ENCODE measurements at regions of chr18 and their contacts with region 1.

Region 1: GRCh38 chr18:2758309-2758708 is 88.5 kb upstream of the EMILIN2 start:
- DNase-seq: no peak
- H3K4me3 ChIP-seq: no peak overlapping the region
- H3K27ac ChIP-seq: no peak overlapping the region
- H3K4me1 ChIP-seq: no peaks in the 10 kb centered on the region
- H3K27me3 ChIP-seq: no peaks in the 10 kb centered on the region
- CTCF ChIP-seq: no peak

Region 2: DNA sequence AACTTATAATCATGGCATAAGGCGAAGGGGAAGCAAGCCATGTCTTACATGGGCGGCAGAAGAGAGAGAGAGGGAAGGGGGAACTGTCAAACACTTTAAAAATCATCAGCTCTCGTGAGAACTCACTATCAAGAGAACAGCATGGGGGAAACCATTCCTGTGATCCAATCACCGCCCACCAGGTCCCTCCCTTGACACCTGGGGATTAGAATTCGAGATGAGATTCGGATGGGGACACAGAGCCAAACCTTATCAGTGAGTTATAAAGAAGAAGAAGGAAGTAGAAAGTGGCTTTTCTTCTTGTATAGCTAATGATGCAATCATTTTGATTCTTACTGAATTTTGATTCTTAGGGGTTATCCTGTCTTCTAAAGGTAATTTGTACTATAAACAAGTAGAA is 51.4 kb before region 1 on chr18:
- CTCF ChIA-PET with region 1: no interaction called
- POLR2A ChIA-PET with region 1: no interaction called
- intact Hi-C with region 1: loop called (anchors 5 kb)
- DNase-seq: no peak
- H3K4me3 ChIP-seq: no peak overlapping the region
- H3K27ac ChIP-seq: peak overlapping the region; percentile 58
- H3K4me1 ChIP-seq: no peaks in the 10 kb centered on the region
- H3K27me3 ChIP-seq: no peaks in the 10 kb centered on the region
- CTCF ChIP-seq: no peak

Region 3: DNA sequence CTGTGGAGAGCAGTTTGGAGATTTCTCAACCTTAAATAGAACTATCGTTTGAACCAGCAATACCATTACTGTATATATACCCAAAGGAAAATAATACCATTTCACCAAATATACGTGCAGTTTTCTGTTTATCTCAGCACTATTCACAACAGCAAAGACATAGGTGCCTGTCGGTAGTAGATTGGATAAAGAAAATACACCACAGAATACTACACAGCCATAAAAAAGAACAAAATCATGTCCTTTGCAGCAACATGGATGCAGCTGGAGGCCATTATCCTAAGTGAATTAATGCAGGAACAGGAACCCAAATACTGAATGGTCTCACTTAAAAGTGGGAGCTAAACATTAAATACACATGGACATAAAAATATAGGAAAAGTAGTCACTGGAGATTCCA is 21.5 kb before region 1 on chr18:
- CTCF ChIA-PET with region 1: no interaction called
- POLR2A ChIA-PET with region 1: no interaction called
- intact Hi-C with region 1: no loop called
- DNase-seq: no peak
- H3K4me3 ChIP-seq: no peak overlapping the region
- H3K27ac ChIP-seq: no peak overlapping the region
- H3K4me1 ChIP-seq: no peaks in the 10 kb centered on the region
- H3K27me3 ChIP-seq: no peaks in the 10 kb centered on the region
- CTCF ChIP-seq: no peak

Measured in PC-9 (cell line).